ENCODE measurements at regions of chr10 and their contacts with region 1.

Region 1: DNA sequence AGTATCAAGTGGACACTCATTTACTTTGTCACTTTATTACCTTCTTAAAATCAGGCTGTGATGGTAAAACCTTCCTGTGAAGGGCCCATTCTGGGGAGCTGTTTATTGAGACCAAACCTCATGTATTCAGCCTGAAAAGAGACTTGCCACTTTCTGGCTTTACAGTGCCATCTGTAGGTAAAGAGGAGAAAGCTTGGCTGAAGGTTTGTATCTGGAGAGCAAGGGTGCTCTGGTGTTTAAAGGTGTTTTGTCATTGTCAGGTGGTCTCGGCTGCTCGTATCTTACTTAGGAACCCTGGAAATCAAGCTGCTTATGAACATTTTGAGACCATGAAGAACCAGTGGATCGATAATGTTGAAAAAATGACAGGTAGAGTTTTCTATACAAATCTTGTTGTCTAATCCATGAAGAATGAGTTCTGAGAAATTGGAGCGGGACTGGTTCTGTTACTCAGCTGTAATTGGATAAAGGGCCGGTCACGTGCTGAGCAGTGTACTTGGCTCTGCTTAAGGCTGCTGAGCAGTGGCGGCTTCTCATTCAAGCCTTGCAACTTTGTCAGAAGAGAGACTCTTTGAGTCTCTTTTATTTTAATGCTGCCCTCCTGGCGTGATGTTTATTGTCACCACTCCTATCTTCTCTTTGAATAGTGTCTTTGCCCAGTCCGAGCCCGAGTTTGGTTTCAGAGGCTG is 46.9 kb downstream of the AP3M1 start:
- DNase-seq: no peak
- H3K4me3 ChIP-seq: no peak overlapping the region
- H3K27ac ChIP-seq: no peak overlapping the region
- H3K27me3 ChIP-seq: no peaks in the 10 kb centered on the region
- CTCF ChIP-seq: peak; percentile 50

Region 2: DNA sequence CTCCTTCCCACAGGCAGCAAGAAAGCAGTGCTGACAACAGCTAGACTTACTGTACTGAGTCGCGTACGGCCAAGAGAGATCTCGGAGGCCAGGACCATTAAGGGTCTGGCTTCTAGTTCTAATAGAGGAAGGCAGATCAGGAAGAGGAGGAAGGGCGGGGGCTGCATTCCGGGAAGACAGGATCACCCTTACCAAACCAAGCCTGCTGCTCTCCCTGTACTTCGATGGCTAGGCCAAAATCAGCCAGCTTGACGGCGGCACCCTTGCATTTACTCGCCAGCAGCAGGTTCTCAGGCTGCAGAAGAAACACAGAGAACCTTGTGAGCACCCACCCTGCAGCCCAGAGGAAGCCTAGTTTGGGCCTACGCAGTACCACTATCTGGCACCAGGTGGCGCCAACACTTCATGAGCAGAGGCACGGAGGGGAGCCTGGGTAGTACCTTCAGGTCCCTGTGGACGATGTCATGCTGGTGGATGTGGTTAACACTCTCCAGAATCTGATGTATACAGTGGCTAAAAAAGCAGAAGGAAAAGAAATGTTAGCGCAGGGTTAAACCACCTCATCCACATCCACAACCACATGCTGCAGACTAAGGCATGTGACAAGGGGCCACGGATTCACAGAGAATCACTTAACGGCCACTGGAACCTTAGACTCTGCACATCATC is 254.7 kb before region 1 on chr10:
- CTCF ChIA-PET with region 1: interaction called, 11 read pairs
- POLR2A ChIA-PET with region 1: no interaction called
- DNase-seq: peak; percentile 49
- H3K4me3 ChIP-seq: no peak overlapping the region
- H3K27ac ChIP-seq: no peak overlapping the region
- H3K27me3 ChIP-seq: no peaks in the 10 kb centered on the region
- CTCF ChIP-seq: peak; percentile 99

Measured in AG04450 (cell line).